ENCODE measurements at regions of chr9 and their contacts with region 1.

Region 1: DNA sequence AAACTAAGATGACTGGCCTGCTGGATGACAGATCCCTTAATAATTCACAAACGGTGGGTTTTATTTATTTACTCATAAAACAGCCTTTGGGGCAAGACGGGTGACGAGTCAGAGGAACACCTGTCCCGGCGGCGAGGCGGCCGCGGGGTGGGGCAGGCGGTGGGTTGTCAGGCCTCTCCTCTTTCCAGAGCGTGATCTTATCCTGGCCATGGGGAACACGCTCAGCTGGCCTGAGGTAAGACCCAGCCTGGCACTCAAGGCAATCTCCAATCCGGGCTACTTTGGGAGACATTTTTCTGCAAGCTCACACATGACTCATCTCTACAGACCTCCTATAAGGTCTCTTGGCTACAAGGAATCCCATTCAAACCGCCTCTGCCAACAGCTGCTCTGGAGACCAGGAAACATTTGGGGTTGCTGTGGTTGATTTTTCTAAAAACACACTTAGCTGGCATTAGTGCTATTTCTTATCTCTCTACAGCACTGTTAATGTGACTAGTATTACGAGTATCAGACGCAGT is 6.3 kb downstream of the RAPGEF1 start:
- DNase-seq: peak; percentile 33
- H3K4me3 Mint-ChIP-seq: peak overlapping the region; percentile 72
- H3K27ac Mint-ChIP-seq: peak overlapping the region; percentile 95
- H3K4me1 Mint-ChIP-seq: peaks cover 78% of the 10 kb centered on the region
- H3K27me3 Mint-ChIP-seq: no peaks in the 10 kb centered on the region

Region 2: GRCh38 chr9:131270171-131271015 is 463.2 kb before region 1 on chr9:
- intact Hi-C with region 1: loop called (anchors 5 kb)
- DNase-seq: peak; percentile 45
- H3K4me3 Mint-ChIP-seq: peak overlapping the region; percentile 100
- H3K27ac Mint-ChIP-seq: peak overlapping the region; percentile 97
- H3K4me1 Mint-ChIP-seq: peaks cover 58% of the 10 kb centered on the region
- H3K27me3 Mint-ChIP-seq: no peaks in the 10 kb centered on the region

Region 3: DNA sequence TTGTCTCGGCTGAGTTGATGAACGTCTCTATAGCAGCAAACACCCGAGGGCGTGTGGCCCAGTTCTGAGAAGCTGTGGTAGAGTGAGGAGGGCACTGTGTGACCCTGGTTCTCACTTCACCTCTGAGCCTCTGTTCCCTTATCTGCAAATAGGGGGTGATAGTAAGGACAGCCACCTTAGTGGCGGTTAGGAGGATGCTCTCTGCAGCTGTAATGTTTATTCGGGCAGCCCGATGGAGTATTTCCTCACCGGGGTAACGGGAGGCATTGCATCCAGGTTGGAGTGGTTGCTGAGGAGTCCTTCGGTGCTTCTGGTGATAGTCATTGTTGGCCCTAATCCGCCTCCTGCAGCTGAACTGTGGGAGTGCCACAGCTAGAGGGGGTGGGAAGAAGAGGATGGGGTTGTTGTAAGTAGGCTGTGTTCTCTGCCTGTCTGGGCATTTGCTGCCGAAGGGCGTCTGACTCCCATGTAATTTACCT is 325.8 kb before region 1 on chr9:
- intact Hi-C with region 1: loop called (anchors 5 kb)
- DNase-seq: no peak
- H3K4me3 Mint-ChIP-seq: peak overlapping the region; percentile 70
- H3K27ac Mint-ChIP-seq: peak overlapping the region; percentile 77
- H3K4me1 Mint-ChIP-seq: peaks cover 77% of the 10 kb centered on the region
- H3K27me3 Mint-ChIP-seq: no peaks in the 10 kb centered on the region

Region 4: DNA sequence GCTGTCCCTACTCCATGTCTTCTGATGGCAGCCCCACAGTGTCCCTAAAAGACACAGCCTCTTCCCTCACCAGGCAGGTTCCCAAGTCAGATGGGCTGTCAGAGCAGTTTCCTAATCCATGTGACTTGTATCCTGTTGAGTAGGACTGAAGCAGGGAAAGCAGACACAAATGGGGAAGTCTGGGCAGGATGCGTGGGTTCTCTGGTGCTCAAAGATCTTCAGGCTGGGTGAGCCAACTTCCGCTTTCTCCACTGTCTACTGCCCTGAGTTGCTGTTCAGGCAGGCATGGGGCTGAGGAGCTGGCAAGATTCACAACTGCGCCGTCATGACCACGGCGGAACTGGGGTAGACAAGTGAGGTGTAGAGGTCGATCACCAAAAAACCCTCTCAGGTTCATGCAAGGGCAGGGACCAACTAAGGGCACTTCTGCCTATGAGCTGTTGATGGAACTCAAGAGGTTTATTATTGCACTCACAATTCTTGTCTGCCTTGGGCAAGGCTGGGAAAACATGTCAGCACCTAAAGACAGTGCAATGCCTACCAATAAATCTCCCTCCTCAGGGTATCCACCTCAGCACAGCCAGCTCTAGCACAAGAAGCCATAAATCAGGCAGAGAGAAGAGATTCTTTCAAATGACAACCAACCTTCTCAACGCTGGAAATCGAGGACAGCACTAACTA is 77.1 kb before region 1 on chr9:
- intact Hi-C with region 1: loop called (anchors 2 kb)
- DNase-seq: peak; percentile 55
- H3K4me3 Mint-ChIP-seq: peak overlapping the region; percentile 28
- H3K27ac Mint-ChIP-seq: peak overlapping the region; percentile 89
- H3K4me1 Mint-ChIP-seq: peaks cover 61% of the 10 kb centered on the region
- H3K27me3 Mint-ChIP-seq: no peaks in the 10 kb centered on the region

Region 5: GRCh38 chr9:131668439-131669268 is 64.9 kb before region 1 on chr9:
- intact Hi-C with region 1: loop called (anchors 1 kb)
- DNase-seq: peak; percentile 68
- H3K4me3 Mint-ChIP-seq: peak overlapping the region; percentile 72
- H3K27ac Mint-ChIP-seq: peak overlapping the region; percentile 100
- H3K4me1 Mint-ChIP-seq: peaks cover 79% of the 10 kb centered on the region
- H3K27me3 Mint-ChIP-seq: no peaks in the 10 kb centered on the region

Region 6: GRCh38 chr9:131692612-131693562 is 40.7 kb before region 1 on chr9:
- intact Hi-C with region 1: loop called (anchors 5 kb)
- DNase-seq: no peak
- H3K4me3 Mint-ChIP-seq: no peak overlapping the region
- H3K27ac Mint-ChIP-seq: peak overlapping the region; percentile 25
- H3K4me1 Mint-ChIP-seq: peaks cover 81% of the 10 kb centered on the region
- H3K27me3 Mint-ChIP-seq: no peaks in the 10 kb centered on the region

Region 7: GRCh38 chr9:131709771-131710454 is 23.7 kb before region 1 on chr9:
- intact Hi-C with region 1: loop called (anchors 1 kb)
- DNase-seq: peak; percentile 19
- H3K4me3 Mint-ChIP-seq: peak overlapping the region; percentile 18
- H3K27ac Mint-ChIP-seq: peak overlapping the region; percentile 92
- H3K4me1 Mint-ChIP-seq: peaks cover 63% of the 10 kb centered on the region
- H3K27me3 Mint-ChIP-seq: no peaks in the 10 kb centered on the region

Region 8: GRCh38 chr9:132268725-132269352 is 535.2 kb after region 1 on chr9:
- intact Hi-C with region 1: no loop called
- DNase-seq: peak; percentile 57
- H3K4me3 Mint-ChIP-seq: no peak overlapping the region
- H3K27ac Mint-ChIP-seq: no peak overlapping the region
- H3K4me1 Mint-ChIP-seq: peaks cover 2% of the 10 kb centered on the region
- H3K27me3 Mint-ChIP-seq: no peaks in the 10 kb centered on the region